ENCODE measurements at regions of chr12 and their contacts with region 1.

Region 1: DNA sequence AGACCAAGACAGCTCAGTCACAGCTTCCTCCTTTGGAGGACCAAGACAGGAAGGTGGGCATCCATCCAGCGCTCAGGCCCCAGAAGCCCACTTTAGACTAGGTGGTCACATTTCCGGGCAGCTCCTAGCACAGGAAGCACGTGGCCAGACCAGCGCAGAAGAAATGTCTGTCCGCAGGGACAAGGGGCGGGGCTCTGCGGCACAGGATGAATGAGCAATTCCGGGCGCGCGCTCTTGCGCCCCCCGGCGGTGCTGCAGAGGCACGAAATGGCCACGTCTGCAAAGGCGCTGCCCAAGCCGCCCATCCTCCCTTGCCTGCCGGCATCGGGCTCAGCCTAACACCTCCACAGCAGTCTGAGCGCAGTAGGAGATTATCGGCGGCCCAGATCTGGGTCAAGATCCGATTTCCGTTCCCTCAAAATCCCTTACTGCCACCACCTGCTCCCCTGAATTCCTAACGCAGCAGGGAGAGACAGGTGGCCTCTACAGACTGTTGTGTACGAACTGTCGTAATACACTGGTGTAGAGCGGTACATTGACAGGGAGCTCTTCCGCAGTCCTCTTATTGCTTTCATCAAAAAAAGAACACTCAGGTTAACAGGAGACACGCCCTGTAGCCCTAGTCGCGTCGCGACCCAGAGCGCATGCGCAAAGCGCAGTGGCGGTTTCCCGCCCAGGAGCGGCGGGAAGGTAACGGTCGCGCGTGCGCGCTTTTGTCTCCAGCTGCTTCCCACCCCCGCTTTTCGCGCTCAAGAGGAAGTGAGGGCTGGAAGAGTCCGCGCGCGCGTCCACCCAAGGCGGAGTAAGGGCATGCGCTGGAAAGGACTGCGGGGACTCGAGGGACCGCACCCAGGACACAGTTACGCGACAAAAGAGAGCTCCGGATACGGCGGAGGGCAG is 794 bp downstream of the TUBA1B start:
- DNase-seq: peak; percentile 87 to 95 (median 94)
- ATAC-seq: peak; percentile 77
- H3K4me3 ChIP-seq: peak overlapping the region; percentile 92
- H3K4me3 Mint-ChIP-seq: peak overlapping the region; percentile 95 to 99 (median 98)
- H3K27ac ChIP-seq: peak overlapping the region; percentile 95
- H3K27ac Mint-ChIP-seq: peak overlapping the region; percentile 97 to 99 (median 99)
- H3K4me1 ChIP-seq: peaks cover 24 to 27% of the 10 kb centered on the region in 2 donors
- H3K4me1 Mint-ChIP-seq: peaks cover 24 to 61% (median 55%) of the 10 kb centered on the region in 7 donors
- H3K27me3 ChIP-seq: no peaks in the 10 kb centered on the region
- H3K27me3 Mint-ChIP-seq: peaks cover 0 to 7% (median 0%) of the 10 kb centered on the region in 5 donors

Region 2: DNA sequence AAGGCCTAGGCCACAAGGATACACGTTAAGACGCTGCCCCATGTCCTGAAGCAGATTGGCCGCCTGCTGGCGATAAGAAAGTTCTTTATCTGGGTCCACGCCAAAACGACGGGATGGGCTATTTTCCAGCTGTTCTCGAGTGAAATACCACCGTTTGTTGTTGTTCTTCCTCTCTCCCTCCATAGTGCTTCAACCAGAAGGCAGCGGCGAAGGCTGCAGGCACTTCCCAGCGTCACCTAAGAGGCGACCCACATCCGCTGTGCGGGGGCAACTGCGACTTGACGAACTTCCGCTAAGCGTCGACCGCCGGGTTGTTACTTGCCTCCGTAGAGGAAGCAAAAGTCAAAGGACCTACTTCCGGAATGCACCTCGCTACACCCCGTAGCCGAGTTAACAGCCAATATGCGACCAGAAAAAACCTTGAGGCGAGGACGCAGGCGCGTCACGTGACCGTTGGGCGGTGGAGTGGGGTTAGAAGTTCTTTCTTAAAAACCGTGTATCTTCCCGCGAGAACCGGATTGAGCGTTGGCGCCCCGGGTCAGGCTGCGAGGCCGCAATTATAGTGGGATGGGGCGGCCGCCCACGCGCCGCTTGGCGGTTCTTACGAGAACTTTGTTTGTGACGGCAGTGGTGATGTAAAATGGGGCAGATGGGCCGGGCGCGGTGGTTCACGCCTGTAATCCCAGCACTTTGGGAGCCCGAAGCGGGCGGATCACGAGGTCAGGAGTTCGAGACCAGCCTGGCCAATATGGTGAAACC is 413.7 kb before region 1 on chr12 and contains the start of gene CCNT1:
- CTCF ChIA-PET with region 1: no interaction called
- POLR2A ChIA-PET with region 1: no interaction called
- intact Hi-C with region 1: loop called in 1 of 2 experiments (anchors 1 kb)
- DNase-seq: peak; percentile 90 to 100 (median 99)
- ATAC-seq: peak; percentile 93
- H3K4me3 ChIP-seq: peak within 1 kb of the TSS; percentile 88
- H3K4me3 Mint-ChIP-seq: peak within 1 kb of the TSS; percentile 89 to 98 (median 94)
- H3K27ac ChIP-seq: peak within 1 kb of the TSS; percentile 95
- H3K27ac Mint-ChIP-seq: peak within 1 kb of the TSS; percentile 95 to 99 (median 98)
- H3K4me1 ChIP-seq: peaks cover 14 to 24% of the 10 kb centered on the region in 2 donors
- H3K4me1 Mint-ChIP-seq: peaks cover 21 to 50% (median 37%) of the 10 kb centered on the region in 7 donors
- H3K27me3 ChIP-seq: no peaks in the 10 kb centered on the region
- H3K27me3 Mint-ChIP-seq: peaks cover 0 to 4% (median 0%) of the 10 kb centered on the region in 5 donors
- total RNA-seq, gene CCNT1: 62.5 to 127 (median 76.6) TPM

Region 3: GRCh38 chr12:49069507-49070346 is 60.7 kb before region 1 on chr12 and contains the start of gene RHEBL1:
- CTCF ChIA-PET with region 1: interaction called, 8 read pairs
- POLR2A ChIA-PET with region 1: interaction called, 35 read pairs
- intact Hi-C with region 1: loop called (anchors 1 kb)
- DNase-seq: peak; percentile 93 to 99 (median 96)
- ATAC-seq: peak; percentile 100
- H3K4me3 ChIP-seq: peak within 1 kb of the TSS; percentile 99
- H3K4me3 Mint-ChIP-seq: peak within 1 kb of the TSS; percentile 86 to 99 (median 96)
- H3K27ac ChIP-seq: peak within 1 kb of the TSS; percentile 74
- H3K27ac Mint-ChIP-seq: peak within 1 kb of the TSS; percentile 77 to 92 (median 86)
- H3K4me1 ChIP-seq: peaks cover 5 to 13% of the 10 kb centered on the region in 2 donors
- H3K4me1 Mint-ChIP-seq: peaks cover 14 to 31% (median 18%) of the 10 kb centered on the region in 7 donors
- H3K27me3 ChIP-seq: no peaks in the 10 kb centered on the region
- H3K27me3 Mint-ChIP-seq: no peaks in the 10 kb centered on the region
- total RNA-seq, gene RHEBL1: 1.8 to 9.4 (median 3.3) TPM

Region 4: DNA sequence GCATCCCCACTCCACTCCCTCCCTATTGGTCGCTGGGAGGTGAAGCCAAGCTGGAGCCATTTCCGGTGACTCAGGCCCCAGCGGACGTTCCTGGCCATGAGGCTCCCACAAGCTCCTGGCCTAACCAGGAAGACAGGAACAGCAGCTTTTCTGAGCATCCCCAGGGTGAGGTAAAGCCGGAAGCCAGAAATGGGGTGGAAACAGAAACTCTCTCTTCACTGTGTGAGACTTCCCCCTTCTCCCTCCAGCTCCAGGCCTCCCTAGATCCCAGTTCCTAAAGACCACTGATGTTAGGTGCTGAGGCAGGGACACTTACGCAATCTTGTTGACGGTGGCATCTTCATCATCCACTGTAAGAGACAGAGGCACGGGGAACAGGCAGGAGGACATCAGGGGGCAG is 24.8 kb before region 1 on chr12:
- CTCF ChIA-PET with region 1: interaction called, 18 read pairs
- POLR2A ChIA-PET with region 1: interaction called, 150 read pairs
- intact Hi-C with region 1: loop called (anchors 1 kb)
- DNase-seq: no peak
- ATAC-seq: no peak
- H3K4me3 ChIP-seq: no peak overlapping the region
- H3K4me3 Mint-ChIP-seq: no peak overlapping the region
- H3K27ac ChIP-seq: no peak overlapping the region
- H3K27ac Mint-ChIP-seq: peak overlapping the region in 3 of 9 donors; percentile 36 to 62 (median 51)
- H3K4me1 ChIP-seq: peaks cover 9 to 12% of the 10 kb centered on the region in 2 donors
- H3K4me1 Mint-ChIP-seq: peaks cover 19 to 48% (median 40%) of the 10 kb centered on the region in 7 donors
- H3K27me3 ChIP-seq: no peaks in the 10 kb centered on the region
- H3K27me3 Mint-ChIP-seq: no peaks in the 10 kb centered on the region

Region 5: DNA sequence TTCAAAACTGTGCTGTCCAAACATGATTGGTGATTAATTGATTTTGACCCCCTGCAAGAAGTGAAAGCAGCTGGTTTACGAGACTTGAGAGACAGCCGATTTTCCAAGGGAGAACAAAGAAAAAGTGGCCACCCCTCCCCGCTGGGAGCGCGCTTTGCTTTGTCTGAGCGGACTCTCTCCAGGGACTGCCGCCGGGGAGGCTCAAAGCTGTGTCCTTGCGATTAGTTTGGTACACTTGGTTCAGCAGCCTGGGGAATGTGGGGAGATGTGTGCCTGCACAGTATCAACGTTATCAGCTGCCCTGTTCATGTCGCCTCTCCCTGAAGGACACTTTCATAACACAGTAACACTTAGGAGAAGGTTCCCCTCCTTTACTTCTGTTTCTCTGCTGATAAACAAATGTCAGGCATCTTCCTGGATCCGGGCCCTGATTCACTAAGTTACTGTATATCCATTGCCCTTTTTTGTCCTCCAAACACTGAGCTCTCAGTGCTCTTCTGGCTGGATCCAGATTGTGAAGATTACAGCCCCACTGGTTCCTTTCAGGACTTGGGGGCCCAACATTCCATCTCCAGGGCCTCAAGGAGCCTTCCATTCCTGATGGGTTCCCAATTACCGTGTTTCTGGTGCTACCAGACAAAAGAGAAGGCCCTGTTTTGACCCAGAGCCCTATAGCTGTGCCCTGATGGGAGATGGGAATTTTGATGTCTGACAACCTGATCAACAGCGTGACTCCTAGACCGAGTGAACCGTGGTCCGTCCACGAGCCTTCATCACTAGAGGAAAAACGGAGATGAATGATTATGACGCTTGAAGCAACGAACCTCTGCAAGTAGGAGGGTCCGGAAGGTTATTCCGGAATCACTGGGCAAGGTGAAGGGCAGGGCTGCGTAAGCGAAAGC is 102.8 kb after region 1 on chr12:
- CTCF ChIA-PET with region 1: interaction called, 7 read pairs
- POLR2A ChIA-PET with region 1: interaction called, 38 read pairs
- intact Hi-C with region 1: loop called (anchors 1 kb)
- DNase-seq: peak in 1 of 9 donors; percentile 7
- ATAC-seq: no peak
- H3K4me3 ChIP-seq: no peak overlapping the region
- H3K4me3 Mint-ChIP-seq: peak overlapping the region; percentile 68 to 89 (median 85)
- H3K27ac ChIP-seq: no peak overlapping the region
- H3K27ac Mint-ChIP-seq: peak overlapping the region; percentile 65 to 93 (median 89)
- H3K4me1 ChIP-seq: peaks cover 0 to 7% of the 10 kb centered on the region in 2 donors
- H3K4me1 Mint-ChIP-seq: peaks cover 0 to 12% (median 9%) of the 10 kb centered on the region in 7 donors
- H3K27me3 ChIP-seq: no peaks in the 10 kb centered on the region
- H3K27me3 Mint-ChIP-seq: peaks cover 0 to 7% (median 0%) of the 10 kb centered on the region in 5 donors

Region 6: DNA sequence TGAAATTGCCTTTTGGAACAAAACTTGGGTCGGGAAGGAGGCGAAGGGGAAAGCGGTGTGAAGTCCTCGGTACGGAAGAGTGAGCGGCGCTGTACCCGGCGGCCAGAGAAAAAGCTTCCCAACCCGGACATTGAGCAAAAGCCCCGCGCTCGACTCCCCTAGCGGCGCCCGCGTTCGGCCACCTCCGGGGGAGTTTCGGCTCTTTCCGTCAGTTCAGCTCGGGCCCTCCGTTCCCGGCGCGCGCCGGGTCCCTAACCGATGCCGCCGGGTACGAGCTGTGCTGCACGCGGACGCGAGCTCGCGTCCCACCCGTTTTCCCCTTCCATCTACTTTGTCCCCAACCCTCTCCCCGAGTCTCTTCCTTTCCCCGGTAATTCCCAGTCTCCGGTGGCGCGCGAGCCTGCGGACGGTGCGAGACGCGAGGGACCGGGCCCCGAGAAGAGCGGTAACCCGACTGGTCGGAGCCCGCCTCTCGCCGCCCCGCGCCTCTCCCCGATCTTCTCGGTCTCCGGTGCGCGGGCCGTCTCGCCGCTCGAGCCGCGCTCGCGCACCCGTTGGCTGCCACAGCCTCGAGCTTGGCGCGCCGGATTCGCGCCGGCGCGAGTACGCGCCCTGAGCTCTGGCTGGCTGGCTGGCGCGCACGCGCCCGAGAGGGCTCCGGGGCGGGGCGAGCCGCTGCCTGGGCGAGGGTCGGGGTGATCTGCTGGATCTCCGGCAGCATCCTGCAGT is 236.4 kb after region 1 on chr12:
- CTCF ChIA-PET with region 1: no interaction called
- POLR2A ChIA-PET with region 1: interaction called, 3 read pairs
- intact Hi-C with region 1: loop called in 1 of 2 experiments (anchors 2 kb)
- DNase-seq: peak; percentile 72 to 95 (median 82)
- ATAC-seq: peak; percentile 90
- H3K4me3 ChIP-seq: peak overlapping the region; percentile 90
- H3K4me3 Mint-ChIP-seq: peak overlapping the region; percentile 71 to 97 (median 88)
- H3K27ac ChIP-seq: peak overlapping the region; percentile 87
- H3K27ac Mint-ChIP-seq: peak overlapping the region; percentile 65 to 97 (median 94)
- H3K4me1 ChIP-seq: peaks cover 0 to 15% of the 10 kb centered on the region in 2 donors
- H3K4me1 Mint-ChIP-seq: peaks cover 11 to 39% (median 31%) of the 10 kb centered on the region in 7 donors
- H3K27me3 ChIP-seq: no peaks in the 10 kb centered on the region
- H3K27me3 Mint-ChIP-seq: peaks cover 0 to 2% (median 0%) of the 10 kb centered on the region in 5 donors

Region 7: GRCh38 chr12:49515266-49515665 is 384.9 kb after region 1 on chr12:
- CTCF ChIA-PET with region 1: no interaction called
- POLR2A ChIA-PET with region 1: no interaction called
- intact Hi-C with region 1: no loop called
- DNase-seq: no peak
- ATAC-seq: no peak
- H3K4me3 ChIP-seq: no peak overlapping the region
- H3K4me3 Mint-ChIP-seq: no peak overlapping the region
- H3K27ac ChIP-seq: no peak overlapping the region
- H3K27ac Mint-ChIP-seq: no peak overlapping the region
- H3K4me1 ChIP-seq: no peaks in the 10 kb centered on the region
- H3K4me1 Mint-ChIP-seq: peaks cover 0 to 6% (median 0%) of the 10 kb centered on the region in 7 donors
- H3K27me3 ChIP-seq: no peaks in the 10 kb centered on the region
- H3K27me3 Mint-ChIP-seq: no peaks in the 10 kb centered on the region

Measured in naive thymus-derived CD4-positive, alpha-beta T cell (primary cell).